Naive thymus-derived CD4-positive, alpha-beta T cell (primary cell): ENCODE measurements at regions of chr3 and their contacts with region 1.

Region 1: DNA sequence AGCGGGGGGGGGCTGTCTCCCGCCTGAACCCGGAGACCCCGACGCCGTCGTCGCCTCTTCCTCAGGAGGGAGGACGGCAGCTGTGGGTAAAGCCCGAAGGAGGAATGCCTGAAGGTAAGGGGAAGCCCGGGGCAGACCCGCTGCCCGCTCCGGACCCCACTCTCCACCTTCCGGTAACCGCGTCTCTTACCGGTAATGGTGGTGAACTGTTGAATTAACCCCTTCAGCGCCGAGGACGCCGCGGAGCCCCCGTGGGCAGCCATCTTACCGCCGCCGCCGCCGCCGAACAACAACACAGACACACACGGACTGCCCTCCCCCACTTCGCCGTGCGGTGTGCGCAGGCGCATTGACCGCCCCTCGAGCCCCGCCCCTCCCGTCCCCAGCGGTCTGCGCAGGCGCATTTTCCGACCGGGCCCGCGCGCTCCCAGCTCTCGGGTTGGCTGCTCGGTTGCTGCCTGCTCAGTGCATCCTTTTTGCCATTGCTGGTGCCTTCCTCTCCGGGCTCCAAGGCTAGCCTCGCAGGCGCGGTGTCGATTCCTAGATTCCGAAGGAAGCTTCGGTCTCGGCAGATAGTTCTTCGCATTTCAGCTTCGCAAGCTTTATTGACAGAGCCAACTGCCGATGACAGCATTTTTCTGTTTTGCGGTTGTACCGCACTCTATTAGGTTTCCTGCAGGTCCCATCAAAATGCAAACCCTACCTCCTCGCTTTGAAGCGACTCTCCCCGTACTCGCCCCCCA is at the start of gene UBXN7:
- DNase-seq: peak; percentile 92 to 97 (median 95)
- ATAC-seq: peak; percentile 94
- H3K4me3 ChIP-seq: peak within 1 kb of the TSS; percentile 100
- H3K4me3 Mint-ChIP-seq: peak within 1 kb of the TSS; percentile 81 to 98 (median 86)
- H3K27ac ChIP-seq: peak within 1 kb of the TSS; percentile 90
- H3K27ac Mint-ChIP-seq: peak within 1 kb of the TSS; percentile 68 to 95 (median 81)
- H3K4me1 ChIP-seq: peaks cover 4 to 6% of the 10 kb centered on the region in 2 donors
- H3K4me1 Mint-ChIP-seq: peaks cover 17 to 39% (median 32%) of the 10 kb centered on the region in 7 donors
- H3K27me3 ChIP-seq: no peaks in the 10 kb centered on the region
- H3K27me3 Mint-ChIP-seq: peaks cover 0 to 2% (median 0%) of the 10 kb centered on the region in 5 donors
- total RNA-seq, gene UBXN7: 52.6 to 90.6 (median 77.0) TPM

Region 2: GRCh38 chr3:196274585-196274984 is 157.7 kb before region 1 on chr3:
- CTCF ChIA-PET with region 1: no interaction called
- POLR2A ChIA-PET with region 1: interaction called, 3 read pairs
- intact Hi-C with region 1: loop called in 1 of 2 experiments (anchors 1 kb)
- DNase-seq: peak in 8 of 9 donors; percentile 20 to 72 (median 42)
- ATAC-seq: peak; percentile 91
- H3K4me3 ChIP-seq: peak overlapping the region; percentile 7
- H3K4me3 Mint-ChIP-seq: peak overlapping the region; percentile 41 to 84 (median 74)
- H3K27ac ChIP-seq: peak overlapping the region; percentile 50
- H3K27ac Mint-ChIP-seq: peak overlapping the region; percentile 57 to 96 (median 89)
- H3K4me1 ChIP-seq: peaks cover 10 to 21% of the 10 kb centered on the region in 2 donors
- H3K4me1 Mint-ChIP-seq: peaks cover 19 to 62% (median 37%) of the 10 kb centered on the region in 7 donors
- H3K27me3 ChIP-seq: no peaks in the 10 kb centered on the region
- H3K27me3 Mint-ChIP-seq: no peaks in the 10 kb centered on the region

Region 3: GRCh38 chr3:196287440-196288148 is 144.7 kb before region 1 on chr3 and contains the start of gene PCYT1A:
- CTCF ChIA-PET with region 1: no interaction called
- POLR2A ChIA-PET with region 1: no interaction called
- intact Hi-C with region 1: loop called in 1 of 2 experiments (anchors 1 kb)
- DNase-seq: peak; percentile 48 to 75 (median 65)
- ATAC-seq: peak; percentile 93
- H3K4me3 ChIP-seq: peak within 1 kb of the TSS; percentile 99
- H3K4me3 Mint-ChIP-seq: peak within 1 kb of the TSS; percentile 98 to 100 (median 99)
- H3K27ac ChIP-seq: peak within 1 kb of the TSS; percentile 84
- H3K27ac Mint-ChIP-seq: peak within 1 kb of the TSS; percentile 92 to 98 (median 97)
- H3K4me1 ChIP-seq: peaks cover 12 to 15% of the 10 kb centered on the region in 2 donors
- H3K4me1 Mint-ChIP-seq: peaks cover 20 to 56% (median 46%) of the 10 kb centered on the region in 7 donors
- H3K27me3 ChIP-seq: no peaks in the 10 kb centered on the region
- H3K27me3 Mint-ChIP-seq: peaks cover 0 to 2% (median 0%) of the 10 kb centered on the region in 5 donors
- total RNA-seq, gene PCYT1A: 47.5 to 87.6 (median 62.9) TPM

Region 4: GRCh38 chr3:196454935-196455334 is 22.6 kb after region 1 on chr3:
- CTCF ChIA-PET with region 1: interaction called, 3 read pairs
- POLR2A ChIA-PET with region 1: interaction called, 8 read pairs
- intact Hi-C with region 1: loop called in 1 of 2 experiments (anchors 2 kb)
- DNase-seq: no peak
- ATAC-seq: no peak
- H3K4me3 ChIP-seq: no peak overlapping the region
- H3K4me3 Mint-ChIP-seq: no peak overlapping the region
- H3K27ac ChIP-seq: no peak overlapping the region
- H3K27ac Mint-ChIP-seq: peak overlapping the region in 1 of 9 donors; percentile 36
- H3K4me1 ChIP-seq: no peaks in the 10 kb centered on the region
- H3K4me1 Mint-ChIP-seq: peaks cover 0 to 13% (median 11%) of the 10 kb centered on the region in 7 donors
- H3K27me3 ChIP-seq: no peaks in the 10 kb centered on the region
- H3K27me3 Mint-ChIP-seq: no peaks in the 10 kb centered on the region

Region 5: DNA sequence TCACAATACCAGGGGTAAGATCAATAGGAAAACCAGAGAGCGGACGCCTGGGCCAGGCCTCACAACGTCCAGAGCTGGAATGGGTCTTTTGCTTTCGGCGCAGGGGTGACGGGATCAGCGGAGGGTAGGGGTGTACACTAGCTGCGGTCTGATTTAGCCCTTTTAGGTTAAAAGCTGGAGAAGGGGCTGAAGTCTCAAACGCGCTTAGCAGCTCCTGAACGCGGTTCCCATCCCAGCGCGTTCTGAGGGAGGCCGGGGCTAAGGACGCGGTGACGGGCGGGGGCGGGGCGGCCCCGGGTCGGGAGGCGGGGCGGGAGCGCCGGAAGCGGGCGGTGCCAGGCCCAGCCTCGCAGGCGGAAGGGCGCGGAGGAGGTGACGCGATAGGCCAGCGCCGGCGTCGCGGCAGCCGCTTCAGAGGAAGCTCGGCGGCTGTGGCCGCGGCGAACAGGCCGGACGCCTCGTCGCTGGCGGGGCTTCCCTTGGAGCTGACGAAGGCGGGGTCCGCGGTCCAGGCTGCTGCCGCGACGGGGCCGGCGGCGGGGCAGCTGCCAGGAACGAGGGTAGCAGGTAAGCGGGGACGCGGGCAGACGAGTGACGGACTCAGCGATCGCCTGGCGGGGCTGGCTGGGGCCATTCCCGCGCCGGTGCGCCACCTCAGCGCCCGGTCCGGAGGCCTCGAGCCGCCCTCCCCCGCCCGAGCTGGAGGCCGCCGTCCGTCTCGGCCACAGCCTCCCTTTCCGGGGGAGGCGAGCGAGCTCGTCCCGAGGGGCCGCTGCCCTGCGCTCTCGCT is 435.4 kb after region 1 on chr3 and contains the start of gene SENP5:
- CTCF ChIA-PET with region 1: no interaction called
- POLR2A ChIA-PET with region 1: no interaction called
- intact Hi-C with region 1: loop called (anchors 1 to 5 kb)
- DNase-seq: peak; percentile 79 to 92 (median 87)
- ATAC-seq: peak; percentile 99
- H3K4me3 ChIP-seq: peak within 1 kb of the TSS; percentile 86
- H3K4me3 Mint-ChIP-seq: peak within 1 kb of the TSS; percentile 90 to 99 (median 97)
- H3K27ac ChIP-seq: peak within 1 kb of the TSS; percentile 98
- H3K27ac Mint-ChIP-seq: peak within 1 kb of the TSS; percentile 90 to 99 (median 95)
- H3K4me1 ChIP-seq: peaks cover 13 to 16% of the 10 kb centered on the region in 2 donors
- H3K4me1 Mint-ChIP-seq: peaks cover 9 to 42% (median 34%) of the 10 kb centered on the region in 7 donors
- H3K27me3 ChIP-seq: no peaks in the 10 kb centered on the region
- H3K27me3 Mint-ChIP-seq: no peaks in the 10 kb centered on the region
- total RNA-seq, gene SENP5: 40.6 to 59.4 (median 43.1) TPM